ENCODE measurements at regions of chr9 and their contacts with region 1.

Region 1: GRCh38 chr9:75200892-75201470 is 112.7 kb downstream of the OSTF1 start:
- DNase-seq: peak; percentile 8 to 61
- ATAC-seq: peak in 1 of 2 experiments; percentile 61; a peak in 2 of 6 replicates
- H3K4me3 ChIP-seq: no peak overlapping the region
- H3K27ac ChIP-seq: no peak overlapping the region
- H3K4me1 ChIP-seq: no peaks in the 10 kb centered on the region
- CTCF ChIP-seq: peak; percentile 71
- EP300 ChIP-seq: no peak
- POLR2A ChIP-seq: no peak
- RAD21 ChIP-seq: peak; percentile 69 to 76; a peak in 4 of 5 replicates

Region 2: DNA sequence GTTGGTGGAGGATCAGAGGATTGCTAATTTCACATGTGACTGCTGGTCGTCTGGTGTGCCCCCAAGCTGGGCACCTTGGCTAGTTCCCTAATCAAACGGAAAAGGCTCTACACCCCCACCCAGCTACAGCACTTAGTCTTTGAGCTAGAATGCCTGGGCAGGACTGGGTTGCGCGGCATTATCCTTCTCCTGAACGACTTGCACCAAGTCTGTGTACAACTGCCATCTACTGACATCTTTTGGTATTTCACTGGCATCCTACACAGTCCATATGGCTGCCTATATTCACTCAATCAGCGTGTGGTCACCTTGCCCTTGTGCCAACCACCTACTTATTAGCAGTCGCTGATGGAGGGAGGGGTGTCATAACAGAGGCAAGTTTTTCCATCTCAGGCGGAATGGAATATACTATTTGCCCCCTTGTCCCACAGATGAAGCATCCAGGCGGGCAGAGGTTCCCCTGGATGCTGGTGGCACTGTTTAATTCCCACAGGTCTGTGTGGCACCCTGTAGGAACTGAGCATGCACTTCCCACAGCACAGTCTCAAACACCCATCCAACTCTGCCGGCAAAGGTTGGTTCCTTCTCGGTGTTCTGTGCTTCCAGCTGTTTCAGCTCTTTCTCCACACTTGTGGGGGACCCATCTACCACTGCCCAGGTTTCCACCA is 37.5 kb after region 1 on chr9:
- CTCF ChIA-PET with region 1: interaction called, 28 read pairs
- POLR2A ChIA-PET with region 1: no interaction called
- DNase-seq: peak; percentile 36 to 65
- ATAC-seq: peak; percentile 89 to 98
- H3K4me3 ChIP-seq: no peak overlapping the region
- H3K27ac ChIP-seq: no peak overlapping the region
- H3K4me1 ChIP-seq: no peaks in the 10 kb centered on the region
- CTCF ChIP-seq: peak; percentile 36; the same call in 2 of the 3 replicates
- EP300 ChIP-seq: no peak
- POLR2A ChIP-seq: no peak
- RAD21 ChIP-seq: peak; percentile 43 to 54; a peak in 4 of 5 replicates